K562 (cell line): ENCODE measurements at regions of chr5 and their contacts with region 1.

Region 1: DNA sequence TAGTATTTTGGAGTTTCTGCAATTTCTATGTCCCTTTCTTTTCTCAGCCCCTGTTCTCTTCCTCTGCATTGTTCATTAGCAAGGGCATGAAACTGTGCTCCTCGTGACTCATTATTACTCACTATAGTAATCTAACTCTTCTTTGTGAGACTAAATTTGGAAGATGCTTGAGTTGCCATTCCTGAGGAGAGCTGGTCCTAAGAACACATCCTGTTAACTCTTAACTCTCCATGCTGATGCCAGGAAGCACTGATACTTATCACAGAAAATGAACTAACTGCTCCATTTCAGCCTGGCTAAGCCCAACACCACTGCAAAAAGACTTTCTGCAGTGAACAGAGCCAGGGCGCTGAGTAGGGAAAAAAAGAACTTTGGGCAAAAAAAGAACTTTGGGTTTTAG is 10.6 kb upstream of the CSNK1A1 start:
- DNase-seq: peak in 2 of 4 experiments; percentile 36 to 63
- ATAC-seq: peak; percentile 57
- H3K4me3 ChIP-seq: no peak overlapping the region
- H3K27ac ChIP-seq: peak overlapping the region; percentile 53; the same call in 1 of the 3 replicates
- H3K4me1 ChIP-seq: peaks cover 8 to 29% of the 10 kb centered on the region in 2 experiments; a peak in 4 of 5 replicates
- H3K27me3 ChIP-seq: no peaks in the 10 kb centered on the region
- CTCF ChIP-seq: no peak
- EP300 ChIP-seq: peak; percentile 61
- POLR2A ChIP-seq: no peak
- RAD21 ChIP-seq: peak in 1 of 2 experiments; percentile 18; a peak in 1 of 4 replicates

Region 2: DNA sequence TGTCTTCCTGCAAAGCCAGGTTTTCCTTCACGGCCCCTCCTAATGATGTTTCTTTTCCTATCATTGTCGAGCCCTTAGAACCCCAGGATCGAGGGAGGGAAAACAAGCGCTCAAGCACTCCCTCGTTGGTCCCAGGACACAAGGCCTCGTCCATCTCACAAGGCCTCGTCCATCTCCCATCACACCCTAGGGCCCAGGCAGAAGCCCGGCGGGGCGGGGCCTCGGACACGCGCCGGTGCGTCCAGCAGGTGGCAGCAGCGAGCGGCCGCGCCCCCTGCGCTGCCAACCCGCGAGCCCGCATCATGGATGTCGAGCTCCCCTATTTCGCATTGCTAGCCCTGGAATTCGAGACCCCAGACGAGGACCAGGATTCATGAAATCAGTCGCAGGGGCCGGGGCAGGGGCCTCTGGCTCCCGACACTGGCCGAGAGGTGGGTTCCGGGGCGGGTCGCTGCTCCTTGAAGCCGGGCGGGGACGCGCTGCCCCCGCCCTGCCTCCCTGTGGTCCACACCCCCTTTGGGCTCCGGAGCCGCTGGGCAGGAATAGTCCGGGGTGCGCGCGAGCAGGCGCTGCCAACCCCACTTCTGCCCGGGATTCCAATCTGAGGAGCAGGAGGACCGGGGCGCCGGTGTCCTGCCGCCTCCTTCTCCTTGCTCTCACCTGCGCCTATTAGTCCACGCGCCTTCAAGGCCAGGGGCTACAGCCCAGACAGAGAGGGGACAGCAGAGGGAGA is 420.5 kb before region 1 on chr5 and contains the start of gene ABLIM3:
- CTCF ChIA-PET with region 1: no interaction called
- POLR2A ChIA-PET with region 1: no interaction called
- in situ Hi-C with region 1: loop called (anchors 25 kb)
- intact Hi-C with region 1: loop called (anchors 5 kb)
- DNase-seq: peak; percentile 72 to 93 (median 90)
- ATAC-seq: peak; percentile 99
- H3K4me3 ChIP-seq: peak within 1 kb of the TSS; percentile 45
- H3K27ac ChIP-seq: no peak within 1 kb of the TSS
- H3K4me1 ChIP-seq: peaks cover 0 to 11% of the 10 kb centered on the region in 2 experiments; a peak in 2 of 5 replicates
- H3K27me3 ChIP-seq: peaks cover 2 to 16% of the 10 kb centered on the region in 2 experiments; a peak in 2 of 5 replicates
- CTCF ChIP-seq: peak; percentile 86 to 94 (median 92)
- EP300 ChIP-seq: no peak
- POLR2A ChIP-seq: no peak
- RAD21 ChIP-seq: peak; percentile 83 to 85
- polyA plus RNA-seq, gene ABLIM3: 0.08 to 0.10 TPM

Region 3: GRCh38 chr5:149367249-149367971 is 194.4 kb before region 1 on chr5:
- CTCF ChIA-PET with region 1: interaction called, 4 read pairs
- POLR2A ChIA-PET with region 1: interaction called, 4 read pairs
- in situ Hi-C with region 1: no loop called
- intact Hi-C with region 1: loop called (anchors 5 kb)
- DNase-seq: peak; percentile 74 to 90 (median 81)
- ATAC-seq: peak; percentile 90
- H3K4me3 ChIP-seq: no peak overlapping the region
- H3K27ac ChIP-seq: no peak overlapping the region
- H3K4me1 ChIP-seq: peaks cover 23 to 25% of the 10 kb centered on the region in 2 experiments; a peak in 4 of 5 replicates
- H3K27me3 ChIP-seq: no peaks in the 10 kb centered on the region
- CTCF ChIP-seq: peak; percentile 96 to 97 (median 96)
- EP300 ChIP-seq: no peak
- POLR2A ChIP-seq: no peak
- RAD21 ChIP-seq: peak; percentile 62 to 85

Region 4: DNA sequence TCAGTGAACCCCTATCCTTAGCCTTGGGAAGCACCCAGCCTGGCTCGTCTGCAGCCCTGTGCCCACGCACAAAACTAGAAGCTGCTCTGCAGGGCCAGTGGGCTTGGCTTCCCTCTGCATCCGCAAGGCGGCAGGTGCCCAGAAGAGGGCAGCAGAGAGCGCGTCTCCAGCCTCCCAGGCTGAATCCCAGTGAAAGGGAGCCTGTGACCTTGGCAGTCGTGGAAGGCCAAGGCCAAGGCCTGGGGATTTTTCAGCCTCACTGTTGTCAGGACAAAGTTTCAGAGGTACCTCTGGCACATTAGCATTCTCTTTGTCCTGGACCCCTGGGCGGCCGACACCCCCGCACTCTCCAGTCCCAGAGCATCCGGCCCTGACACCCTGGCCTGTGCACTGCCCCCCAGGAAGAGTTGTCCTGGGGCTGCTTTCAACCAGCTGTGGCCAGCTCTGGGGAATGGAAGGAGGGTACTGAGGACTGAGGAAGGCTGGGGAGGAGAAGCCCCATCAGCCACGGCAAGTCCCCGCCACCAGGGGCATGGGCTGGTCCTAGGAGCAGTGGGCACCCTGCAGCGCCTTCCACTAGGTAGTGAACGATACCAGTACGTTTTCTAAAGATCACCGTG is 119.2 kb before region 1 on chr5:
- CTCF ChIA-PET with region 1: interaction called, 14 read pairs
- POLR2A ChIA-PET with region 1: interaction called, 3 read pairs
- in situ Hi-C with region 1: no loop called
- intact Hi-C with region 1: no loop called
- DNase-seq: peak; percentile 76 to 86 (median 78)
- ATAC-seq: peak; percentile 83
- H3K4me3 ChIP-seq: no peak overlapping the region
- H3K27ac ChIP-seq: peak overlapping the region; percentile 18; the same call in 1 of the 3 replicates
- H3K4me1 ChIP-seq: peaks cover 32 to 44% of the 10 kb centered on the region in 2 experiments
- H3K27me3 ChIP-seq: no peaks in the 10 kb centered on the region
- CTCF ChIP-seq: peak; percentile 91 to 96 (median 92)
- EP300 ChIP-seq: no peak
- POLR2A ChIP-seq: no peak
- RAD21 ChIP-seq: peak; percentile 71 to 93

Region 5: DNA sequence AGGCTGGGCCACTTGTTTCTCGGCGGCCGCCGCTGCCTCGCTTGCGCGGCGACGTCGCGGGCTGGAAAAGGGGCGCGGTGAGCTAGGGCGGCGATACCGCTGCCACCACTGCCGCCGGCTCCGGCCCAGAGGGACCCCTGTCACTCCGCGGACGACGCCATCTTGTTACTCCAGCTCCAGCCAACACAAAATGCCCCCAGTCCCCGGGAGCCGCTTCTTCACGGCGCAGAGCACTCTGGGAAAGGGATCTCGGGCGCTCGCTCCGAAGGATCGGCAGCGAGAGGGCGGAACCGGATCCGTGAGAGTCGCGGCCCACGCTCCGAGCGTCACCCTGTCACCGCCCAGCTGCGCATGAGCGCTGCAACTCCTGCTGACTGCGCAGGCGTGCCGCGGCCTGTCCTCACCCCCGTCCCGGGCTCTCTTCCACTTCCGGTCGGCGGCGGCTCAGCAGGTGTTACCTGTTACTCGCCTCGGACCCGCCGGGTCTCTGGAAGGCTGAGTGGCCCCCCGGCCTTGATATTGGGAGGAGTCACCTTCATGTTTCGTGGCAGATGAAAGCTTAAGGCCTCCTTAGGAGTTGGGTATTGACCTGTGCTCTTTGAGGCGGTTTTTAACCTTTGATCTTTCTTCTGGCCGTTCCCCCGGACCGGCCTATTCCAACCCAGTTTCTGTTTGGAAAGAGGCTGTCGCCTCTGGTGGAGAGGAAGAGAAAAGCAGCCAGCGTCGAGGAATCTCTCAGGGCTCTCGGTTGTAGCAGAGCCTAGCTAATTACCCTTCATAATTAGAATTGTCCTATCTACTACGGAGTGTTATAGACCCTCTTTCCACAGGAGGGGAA is 10.4 kb before region 1 on chr5 and contains the start of gene CSNK1A1:
- CTCF ChIA-PET with region 1: no interaction called
- POLR2A ChIA-PET with region 1: interaction called, 14 read pairs
- in situ Hi-C with region 1: no loop called
- intact Hi-C with region 1: no loop called
- DNase-seq: peak; percentile 99 to 100 (median 99)
- ATAC-seq: peak; percentile 91
- H3K4me3 ChIP-seq: peak within 1 kb of the TSS; percentile 97
- H3K27ac ChIP-seq: peak within 1 kb of the TSS; percentile 82
- H3K4me1 ChIP-seq: peaks cover 4 to 10% of the 10 kb centered on the region in 2 experiments; a peak in 4 of 5 replicates
- H3K27me3 ChIP-seq: no peaks in the 10 kb centered on the region
- CTCF ChIP-seq: peak; percentile 77 to 89 (median 88)
- EP300 ChIP-seq: 0 out of 2 replicates have a peak, but pooled peaks have one; percentile 39
- POLR2A ChIP-seq: peak; percentile 95
- RAD21 ChIP-seq: peak; percentile 67 to 68; a peak in 3 of 4 replicates
- polyA plus RNA-seq, gene CSNK1A1: 49.1 to 63.3 TPM